MCF 10A (cell line): ENCODE measurements at regions of chr6 and their contacts with region 1.

Region 1: GRCh38 chr6:49625140-49625539 is 11.5 kb downstream of the RHAG start:
- DNase-seq: no peak
- H3K4me3 Mint-ChIP-seq: no peak overlapping the region
- H3K27ac Mint-ChIP-seq: no peak overlapping the region
- H3K4me1 Mint-ChIP-seq: no peaks in the 10 kb centered on the region
- H3K27me3 Mint-ChIP-seq: no peaks in the 10 kb centered on the region
- CTCF ChIP-seq: no peak

Region 2: GRCh38 chr6:49676696-49677281 is 51.6 kb after region 1 on chr6:
- CTCF ChIA-PET with region 1: interaction called, 12 read pairs
- POLR2A ChIA-PET with region 1: no interaction called
- intact Hi-C with region 1: no loop called
- DNase-seq: peak; percentile 57
- H3K4me3 Mint-ChIP-seq: no peak overlapping the region
- H3K27ac Mint-ChIP-seq: no peak overlapping the region
- H3K4me1 Mint-ChIP-seq: no peaks in the 10 kb centered on the region
- H3K27me3 Mint-ChIP-seq: peaks cover 9% of the 10 kb centered on the region
- CTCF ChIP-seq: no peak

Region 3: DNA sequence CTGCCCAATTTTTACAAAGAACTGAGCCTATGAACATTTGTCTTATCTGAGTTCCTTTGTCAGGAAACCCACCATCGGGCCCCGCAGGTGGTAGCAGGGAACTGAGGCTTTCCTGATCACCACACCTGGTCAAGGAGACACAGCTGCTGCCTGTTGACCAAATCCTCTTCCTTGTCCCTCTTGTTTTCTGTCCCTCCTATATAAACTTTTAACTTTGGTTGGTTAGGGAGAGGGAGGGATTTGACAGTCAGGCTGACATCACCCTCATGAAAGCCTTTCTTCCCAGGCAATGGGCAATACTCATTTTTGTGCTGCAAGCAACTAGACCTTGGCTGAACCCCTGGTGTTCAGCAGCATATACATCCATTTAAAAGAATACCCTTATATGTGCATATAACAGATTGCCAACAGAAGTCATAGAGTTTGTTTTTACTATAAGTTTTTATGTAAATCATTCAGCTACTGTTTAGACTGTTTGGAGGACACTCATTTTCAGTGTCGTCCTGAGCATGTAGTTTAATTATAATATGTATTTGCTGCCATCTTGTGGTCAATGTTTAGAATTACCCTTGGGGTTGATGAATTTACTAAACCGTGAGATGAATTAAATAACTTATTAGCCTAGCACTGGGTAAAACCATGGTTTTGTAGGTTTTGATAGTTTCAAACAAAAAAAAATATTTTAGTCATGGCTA is 224.2 kb after region 1 on chr6:
- CTCF ChIA-PET with region 1: interaction called, 104 read pairs
- POLR2A ChIA-PET with region 1: no interaction called
- intact Hi-C with region 1: loop called (anchors 1 kb)
- DNase-seq: peak; percentile 55
- H3K4me3 Mint-ChIP-seq: no peak overlapping the region
- H3K27ac Mint-ChIP-seq: no peak overlapping the region
- H3K4me1 Mint-ChIP-seq: no peaks in the 10 kb centered on the region
- H3K27me3 Mint-ChIP-seq: peaks cover 35% of the 10 kb centered on the region
- CTCF ChIP-seq: peak; percentile 54

Region 4: DNA sequence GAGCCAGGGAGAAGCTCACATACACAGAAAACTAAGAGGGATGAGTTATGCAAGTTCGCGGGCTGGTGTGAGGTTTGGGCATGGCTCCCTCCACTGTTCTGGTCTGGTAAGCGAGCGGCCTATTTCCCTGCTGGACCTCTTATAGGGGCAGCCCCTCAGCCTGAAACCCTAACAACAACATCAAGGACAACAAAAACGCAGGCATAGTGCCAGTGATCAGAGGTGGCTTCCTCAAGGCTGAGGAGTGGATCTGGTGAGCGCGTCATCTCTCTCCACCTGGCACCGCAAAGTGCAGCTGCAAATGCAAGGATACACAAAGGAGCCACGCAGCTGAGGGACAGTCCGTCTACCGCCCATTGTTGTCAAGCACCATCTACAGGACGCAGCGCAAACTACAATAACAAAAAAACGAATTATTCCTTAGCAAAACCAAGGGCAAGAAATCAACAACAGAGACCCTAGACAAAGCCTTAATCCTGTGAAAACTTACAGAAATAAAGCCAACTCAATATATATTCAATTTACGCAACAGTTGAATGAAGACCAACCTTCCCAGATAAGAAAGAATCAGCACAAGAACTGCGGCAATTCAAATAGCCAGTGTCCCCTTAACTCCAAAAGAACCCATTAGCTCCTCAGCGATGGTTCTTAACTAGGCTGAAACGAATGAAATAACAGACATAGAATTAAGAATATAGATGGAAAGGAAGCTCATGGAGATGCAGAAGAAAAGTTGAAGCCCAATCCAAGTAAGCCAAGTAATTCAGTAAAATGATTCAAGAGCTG is 405.8 kb after region 1 on chr6:
- CTCF ChIA-PET with region 1: interaction called, 7 read pairs
- POLR2A ChIA-PET with region 1: interaction called, 3 read pairs
- intact Hi-C with region 1: loop called (anchors 1 kb)
- DNase-seq: peak; percentile 51
- H3K4me3 Mint-ChIP-seq: no peak overlapping the region
- H3K27ac Mint-ChIP-seq: no peak overlapping the region
- H3K4me1 Mint-ChIP-seq: no peaks in the 10 kb centered on the region
- H3K27me3 Mint-ChIP-seq: peaks cover 43% of the 10 kb centered on the region
- CTCF ChIP-seq: peak; percentile 46

Region 5: DNA sequence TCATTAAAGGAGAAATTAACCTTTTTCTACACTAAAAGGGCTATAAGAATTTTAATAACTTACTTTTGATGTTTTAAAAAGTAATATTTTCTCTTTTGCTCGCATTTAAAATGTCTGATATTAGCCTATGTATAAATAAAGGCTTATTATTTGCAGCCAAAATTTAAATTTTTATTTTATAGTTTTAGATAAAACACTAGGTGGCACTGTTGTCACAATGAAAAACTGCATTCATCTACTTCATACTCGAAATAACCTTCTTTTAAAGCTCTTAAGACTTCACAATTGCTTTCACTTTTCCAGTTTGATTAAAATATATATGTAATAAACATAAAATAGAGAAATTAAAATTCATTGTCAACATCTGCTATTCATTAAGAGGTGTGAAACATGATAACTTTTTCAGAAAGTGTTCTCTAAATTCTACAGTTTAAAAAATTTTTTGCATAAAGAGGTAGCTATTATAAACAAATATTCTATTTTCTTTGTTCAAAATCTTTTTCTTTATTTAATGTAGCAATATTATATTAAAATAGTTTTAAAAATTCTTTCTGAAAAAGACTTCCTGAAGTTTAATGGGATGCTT is 503.4 kb after region 1 on chr6:
- CTCF ChIA-PET with region 1: no interaction called
- POLR2A ChIA-PET with region 1: no interaction called
- intact Hi-C with region 1: no loop called
- DNase-seq: peak; percentile 23
- H3K4me3 Mint-ChIP-seq: no peak overlapping the region
- H3K27ac Mint-ChIP-seq: no peak overlapping the region
- H3K4me1 Mint-ChIP-seq: no peaks in the 10 kb centered on the region
- H3K27me3 Mint-ChIP-seq: peaks cover 73% of the 10 kb centered on the region
- CTCF ChIP-seq: peak; percentile 20